Endothelial cell of umbilical vein (primary cell): ENCODE measurements at regions of chr21 and their contacts with region 1.

Region 1: DNA sequence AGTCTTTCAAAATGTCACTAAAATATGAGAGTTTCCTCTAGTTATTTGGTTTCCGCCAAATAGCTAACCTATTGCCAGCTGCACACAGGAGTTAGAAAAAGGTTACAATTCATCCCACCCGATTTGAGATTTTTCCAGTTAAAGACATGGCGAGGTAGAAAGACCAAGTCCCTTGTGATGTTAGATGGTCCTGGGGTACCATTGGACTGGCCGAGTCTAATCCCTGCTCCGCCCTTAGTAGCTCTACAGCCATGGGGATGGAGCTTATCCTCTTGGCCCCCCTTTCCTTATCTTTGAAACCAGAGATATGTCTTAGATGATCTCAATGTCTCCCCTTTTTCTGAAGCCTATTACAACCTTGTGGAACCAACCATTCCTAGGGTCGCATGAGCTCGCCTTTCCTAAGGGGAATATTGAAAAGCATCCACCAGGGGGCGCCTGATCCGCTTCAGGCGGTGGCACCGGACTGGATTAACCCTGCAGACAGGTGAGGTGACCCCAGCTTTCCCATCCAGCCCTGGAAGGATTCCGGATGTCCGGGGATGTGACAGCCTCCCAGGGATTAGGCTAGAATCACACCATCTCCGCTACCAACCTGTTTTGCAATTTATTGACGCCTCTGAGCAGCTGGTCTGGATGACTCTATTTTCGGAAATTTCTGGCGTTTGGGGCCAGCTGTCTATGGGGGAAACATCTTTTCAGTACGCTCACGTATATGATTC is 68.3 kb upstream of the SIM2 start:
- DNase-seq: peak; percentile 36
- H3K4me3 ChIP-seq: no peak overlapping the region
- H3K27ac ChIP-seq: no peak overlapping the region
- H3K4me1 ChIP-seq: no peaks in the 10 kb centered on the region
- H3K27me3 ChIP-seq: peaks cover 12 to 13% of the 10 kb centered on the region in 2 experiments
- CTCF ChIP-seq: peak; percentile 73 to 76
- POLR2A ChIP-seq: no peak

Region 2: GRCh38 chr21:36504067-36505058 is 126.3 kb before region 1 on chr21:
- CTCF ChIA-PET with region 1: interaction called, 14 read pairs
- POLR2A ChIA-PET with region 1: no interaction called
- dilution Hi-C with region 1: no loop called
- intact Hi-C with region 1: no loop called
- DNase-seq: peak; percentile 55
- H3K4me3 ChIP-seq: no peak overlapping the region
- H3K27ac ChIP-seq: no peak overlapping the region
- H3K4me1 ChIP-seq: no peaks in the 10 kb centered on the region
- H3K27me3 ChIP-seq: no peaks in the 10 kb centered on the region
- CTCF ChIP-seq: peak; percentile 61 to 67
- POLR2A ChIP-seq: no peak

Region 3: DNA sequence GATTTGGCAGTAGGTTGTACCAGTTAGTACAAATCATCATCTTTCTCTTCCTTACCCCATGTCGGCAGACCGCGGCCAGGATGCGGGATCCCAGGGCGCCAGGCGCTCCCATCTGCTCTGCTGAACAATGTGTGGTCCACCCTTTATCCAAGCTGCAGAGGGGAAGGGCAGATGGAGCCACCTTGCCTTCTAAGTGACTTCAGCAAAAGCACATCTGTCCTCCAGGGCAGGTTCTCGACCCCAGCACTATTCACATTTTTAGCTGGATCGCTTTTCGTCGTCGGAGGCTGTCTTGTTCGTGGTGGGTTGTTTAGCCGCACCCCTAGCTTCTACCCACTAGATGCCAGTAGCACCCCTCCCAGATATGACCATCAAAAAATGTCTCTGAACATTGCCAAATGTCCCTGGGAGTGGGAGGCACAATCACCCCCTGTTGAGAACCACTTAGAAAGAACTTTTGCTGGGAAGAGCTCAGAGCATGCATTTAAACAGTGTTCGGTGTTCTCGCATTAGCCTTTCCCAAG is 10.1 kb after region 1 on chr21:
- CTCF ChIA-PET with region 1: interaction called, 22 read pairs
- POLR2A ChIA-PET with region 1: no interaction called
- dilution Hi-C with region 1: no loop called
- intact Hi-C with region 1: no loop called
- DNase-seq: no peak
- H3K4me3 ChIP-seq: no peak overlapping the region
- H3K27ac ChIP-seq: no peak overlapping the region
- H3K4me1 ChIP-seq: peaks cover 27% of the 10 kb centered on the region
- H3K27me3 ChIP-seq: peaks cover 0 to 2% of the 10 kb centered on the region in 2 experiments
- CTCF ChIP-seq: peak in 1 of 2 donors; percentile 5
- POLR2A ChIP-seq: no peak

Region 4: DNA sequence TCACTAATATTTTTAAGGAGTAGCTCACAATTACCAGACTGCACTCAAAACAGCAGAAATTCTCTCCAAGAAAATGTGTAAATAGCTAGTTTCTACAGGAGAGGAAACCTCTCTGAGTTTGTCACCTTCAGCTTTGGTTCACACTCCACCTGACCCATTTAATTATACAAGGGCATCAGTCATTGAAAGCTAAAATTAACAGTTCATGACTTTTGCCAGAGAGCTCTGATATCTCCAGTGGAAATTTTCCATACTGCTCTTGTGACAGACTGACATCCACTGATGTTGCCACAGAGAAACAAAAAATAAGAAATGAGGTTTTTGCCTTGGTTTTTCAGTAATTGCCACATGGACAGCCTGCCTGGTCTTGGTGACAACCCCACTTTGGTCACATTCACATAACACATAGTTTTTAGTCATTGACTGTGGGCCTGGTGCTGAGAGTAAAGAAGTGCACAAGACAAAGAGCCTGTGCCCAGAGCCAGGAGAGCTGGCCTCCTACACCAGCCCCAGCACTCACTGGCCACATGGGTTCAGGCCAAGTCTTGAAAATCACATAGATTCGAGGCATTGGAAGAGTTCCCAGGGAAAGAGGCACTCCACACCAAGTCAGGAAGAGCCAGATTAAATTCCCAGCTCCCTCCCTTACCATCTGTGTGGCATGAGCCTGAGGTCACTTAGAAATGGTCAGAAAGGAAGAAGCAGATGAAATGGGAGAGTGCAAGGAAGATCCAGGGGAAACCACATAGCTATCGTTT is 54.5 kb after region 1 on chr21:
- CTCF ChIA-PET with region 1: interaction called, 31 read pairs
- POLR2A ChIA-PET with region 1: no interaction called
- dilution Hi-C with region 1: no loop called
- intact Hi-C with region 1: no loop called
- DNase-seq: no peak
- H3K4me3 ChIP-seq: no peak overlapping the region
- H3K27ac ChIP-seq: no peak overlapping the region
- H3K4me1 ChIP-seq: no peaks in the 10 kb centered on the region
- H3K27me3 ChIP-seq: peaks cover 47 to 74% of the 10 kb centered on the region in 2 experiments
- CTCF ChIP-seq: no peak
- POLR2A ChIP-seq: no peak

Region 5: DNA sequence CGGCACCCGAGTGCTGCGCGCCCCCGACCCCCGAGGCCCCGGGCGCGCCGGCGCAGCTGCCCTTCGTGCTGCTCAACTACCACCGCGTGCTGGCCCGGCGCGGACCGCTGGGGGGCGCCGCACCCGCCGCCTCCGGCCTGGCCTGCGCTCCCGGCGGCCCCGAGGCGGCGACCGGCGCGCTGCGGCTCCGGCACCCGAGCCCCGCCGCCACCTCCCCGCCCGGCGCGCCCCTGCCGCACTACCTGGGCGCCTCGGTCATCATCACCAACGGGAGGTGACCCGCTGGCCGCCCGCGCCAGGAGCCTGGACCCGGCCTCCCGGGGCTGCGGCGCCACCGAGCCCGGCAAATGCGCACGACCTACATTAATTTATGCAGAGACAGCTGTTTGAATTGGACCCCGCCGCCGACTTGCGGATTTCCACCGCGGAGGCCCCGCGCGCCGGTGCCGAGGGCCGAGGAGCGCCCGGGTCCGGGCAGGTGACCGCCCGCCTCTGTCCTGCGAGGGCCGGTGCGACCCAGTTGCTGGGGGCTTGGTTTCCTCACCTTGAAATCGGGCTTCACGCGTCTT is 117.3 kb after region 1 on chr21:
- CTCF ChIA-PET with region 1: interaction called, 34 read pairs
- POLR2A ChIA-PET with region 1: no interaction called
- dilution Hi-C with region 1: no loop called
- intact Hi-C with region 1: no loop called
- DNase-seq: peak; percentile 35
- H3K4me3 ChIP-seq: peak overlapping the region; percentile 16 to 37 (median 16)
- H3K27ac ChIP-seq: no peak overlapping the region
- H3K4me1 ChIP-seq: peaks cover 7% of the 10 kb centered on the region
- H3K27me3 ChIP-seq: peaks cover 0 to 8% of the 10 kb centered on the region in 2 experiments
- CTCF ChIP-seq: peak; percentile 20 to 39
- POLR2A ChIP-seq: no peak

Region 6: DNA sequence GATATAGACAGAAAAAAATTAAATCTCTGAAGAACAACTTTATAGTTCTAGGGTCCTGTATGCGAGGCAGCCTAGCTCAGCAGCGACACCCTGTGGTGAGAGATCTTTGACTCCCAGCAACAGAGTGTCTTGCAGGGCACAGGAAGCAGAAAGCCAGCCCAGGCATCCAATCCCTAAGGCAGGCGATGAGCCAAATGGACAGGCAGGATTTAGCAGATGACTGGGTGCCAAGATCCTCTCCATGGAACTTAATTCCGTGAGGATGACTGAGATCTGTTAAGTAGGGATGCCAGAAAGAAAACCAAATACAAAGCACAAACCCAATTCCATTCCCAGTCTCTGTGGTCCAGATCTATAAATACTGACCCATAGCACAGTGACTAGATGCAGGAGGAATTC is 297.1 kb after region 1 on chr21:
- CTCF ChIA-PET with region 1: interaction called, 102 read pairs
- POLR2A ChIA-PET with region 1: no interaction called
- dilution Hi-C with region 1: no loop called
- intact Hi-C with region 1: loop called (anchors 1 kb)
- DNase-seq: peak; percentile 80
- H3K4me3 ChIP-seq: no peak overlapping the region
- H3K27ac ChIP-seq: no peak overlapping the region
- H3K4me1 ChIP-seq: no peaks in the 10 kb centered on the region
- H3K27me3 ChIP-seq: no peaks in the 10 kb centered on the region
- CTCF ChIP-seq: peak; percentile 82 to 89
- POLR2A ChIP-seq: no peak